ENCODE measurements at regions of chr6 and their contacts with region 1.

Region 1: DNA sequence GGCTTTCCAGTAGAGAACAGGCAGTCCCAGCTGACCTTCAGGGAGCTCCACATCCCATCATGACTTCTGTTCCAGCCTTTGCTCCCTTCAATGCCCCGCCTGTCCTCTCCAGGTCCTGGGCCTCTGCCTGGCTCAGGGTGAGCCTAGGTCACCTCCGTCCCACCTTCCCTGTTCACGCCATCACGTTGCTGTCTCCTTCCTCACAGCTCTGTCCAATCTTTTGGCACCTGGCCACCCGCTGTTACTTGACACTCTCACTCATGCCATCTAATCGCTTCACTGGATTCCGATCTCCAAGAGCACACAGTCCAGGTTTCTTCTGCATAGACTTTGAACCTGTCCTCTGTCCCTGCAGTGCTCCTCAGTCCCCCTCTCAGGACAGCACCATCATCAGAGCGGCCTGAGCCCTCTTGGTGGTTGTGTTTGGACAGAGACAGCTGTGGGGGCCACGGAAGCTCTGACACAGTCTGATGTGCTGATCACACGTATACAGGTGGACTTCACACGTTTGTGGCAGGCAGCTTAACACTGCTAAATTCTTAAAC is 34.7 kb upstream of the TIAM2 start:
- DNase-seq: peak; percentile 93
- ATAC-seq: peak; percentile 81
- H3K4me3 ChIP-seq: peak overlapping the region in 1 of 3 experiments; percentile 27; a peak in 2 of 6 replicates
- H3K27ac ChIP-seq: peak overlapping the region; percentile 57
- H3K4me1 ChIP-seq: peaks cover 65% of the 10 kb centered on the region
- H3K27me3 ChIP-seq: no peaks in the 10 kb centered on the region
- CTCF ChIP-seq: no peak
- EP300 ChIP-seq: peak in 1 of 2 experiments; percentile 79; a peak in 2 of 4 replicates
- POLR2A ChIP-seq: 0 out of 4 replicates have a peak, but pooled peaks of 1 of the 2 experiments have one; percentile 14
- RAD21 ChIP-seq: peak; percentile 29; the same call in 1 of the 2 replicates

Region 2: GRCh38 chr6:154995284-154996015 is 35.1 kb after region 1 on chr6 and contains the start of gene TIAM2:
- CTCF ChIA-PET with region 1: no interaction called
- POLR2A ChIA-PET with region 1: interaction called, 3 read pairs
- in situ Hi-C with region 1: no loop called
- intact Hi-C with region 1: loop called (anchors 2 kb)
- DNase-seq: no peak
- ATAC-seq: peak; percentile 82
- H3K4me3 ChIP-seq: peak within 1 kb of the TSS; percentile 63 to 80 (median 72)
- H3K27ac ChIP-seq: no peak within 1 kb of the TSS
- H3K4me1 ChIP-seq: peaks cover 32% of the 10 kb centered on the region
- H3K27me3 ChIP-seq: peaks cover 2 to 19% of the 10 kb centered on the region in 2 experiments; a peak in 3 of 5 replicates
- CTCF ChIP-seq: no peak; the same call in 1 of the 2 replicates
- EP300 ChIP-seq: no peak
- POLR2A ChIP-seq: no peak
- RAD21 ChIP-seq: peak; percentile 16; the same call in 1 of the 2 replicates
- total RNA-seq, gene TIAM2: 4.5 and 5.7 TPM in 2 replicates